MCF 10A (cell line): ENCODE measurements at regions of chr11 and their contacts with region 1.

Region 1: DNA sequence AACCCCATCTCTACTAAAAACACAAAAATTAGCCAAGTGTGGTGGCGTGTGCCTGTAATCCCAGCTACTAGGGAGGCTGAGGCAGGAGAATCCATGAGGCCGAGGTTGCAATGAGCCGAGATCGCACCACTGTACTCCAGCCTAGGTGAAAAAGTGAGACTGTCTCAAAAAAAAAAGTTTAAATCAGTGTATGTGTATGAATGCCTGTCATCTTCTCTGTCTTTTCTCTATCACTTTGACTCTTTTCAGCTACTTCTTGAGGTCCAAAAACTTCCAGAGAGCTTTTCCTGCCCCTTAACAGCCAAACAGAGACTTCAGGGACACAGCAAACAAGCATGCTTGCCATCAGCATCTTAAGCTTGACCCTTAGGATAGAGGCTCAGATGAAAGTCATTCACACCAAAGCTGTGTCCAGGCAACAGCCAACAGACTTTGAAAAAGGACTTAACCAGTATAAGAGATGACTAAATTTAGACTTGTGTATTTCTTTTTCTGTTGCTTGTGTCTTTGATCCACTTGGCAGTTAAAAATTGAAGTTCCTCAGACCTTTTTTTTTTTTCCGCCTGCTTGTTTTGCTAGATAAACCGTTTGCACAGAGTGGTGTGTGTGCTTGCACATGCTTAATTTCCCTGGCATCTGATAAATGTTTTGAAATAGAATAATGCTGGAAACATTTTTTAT is 151.9 kb downstream of the DBX1 start:
- DNase-seq: no peak
- H3K4me3 Mint-ChIP-seq: no peak overlapping the region
- H3K27ac Mint-ChIP-seq: no peak overlapping the region
- H3K4me1 Mint-ChIP-seq: peaks cover 24% of the 10 kb centered on the region
- H3K27me3 Mint-ChIP-seq: no peaks in the 10 kb centered on the region
- CTCF ChIP-seq: no peak

Region 2: DNA sequence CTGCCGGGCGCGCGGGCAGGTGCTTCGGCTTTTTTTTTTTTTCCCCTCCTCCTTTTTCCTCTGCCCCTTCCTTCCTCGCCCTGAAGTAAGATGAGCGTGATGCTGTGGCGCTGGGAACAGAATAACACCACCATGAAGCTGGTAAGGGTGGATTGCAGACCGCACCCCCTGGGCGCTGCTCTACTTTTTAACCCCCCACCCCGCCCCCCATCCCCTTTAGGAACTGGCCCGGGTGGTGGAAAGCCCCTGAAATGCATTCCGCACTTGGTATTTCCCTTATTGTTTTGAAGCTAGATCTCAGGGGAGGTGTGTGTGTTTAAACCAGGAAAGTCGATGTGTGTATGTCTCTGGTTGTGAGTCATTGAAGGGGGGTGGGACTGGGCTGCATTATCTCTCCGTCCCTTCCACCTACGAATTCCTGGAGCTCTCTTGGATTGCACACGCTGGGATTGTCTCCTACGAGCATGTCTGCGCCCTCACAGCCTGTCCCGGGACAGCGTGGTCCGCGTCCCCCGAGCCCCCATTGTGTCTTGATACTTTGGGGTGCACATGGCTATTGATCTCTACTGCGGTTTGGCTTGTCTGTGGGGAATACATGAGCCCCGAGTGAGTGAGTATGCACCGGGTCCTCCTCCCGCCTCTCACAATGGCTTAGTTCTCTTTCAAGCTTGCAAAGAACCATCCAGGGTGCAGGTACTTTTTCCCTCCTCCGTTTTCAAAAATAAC is 230.8 kb before region 1 on chr11:
- CTCF ChIA-PET with region 1: no interaction called
- POLR2A ChIA-PET with region 1: no interaction called
- intact Hi-C with region 1: no loop called
- DNase-seq: peak; percentile 63
- H3K4me3 Mint-ChIP-seq: peak overlapping the region; percentile 70
- H3K27ac Mint-ChIP-seq: no peak overlapping the region
- H3K4me1 Mint-ChIP-seq: peaks cover 17% of the 10 kb centered on the region
- H3K27me3 Mint-ChIP-seq: no peaks in the 10 kb centered on the region
- CTCF ChIP-seq: no peak

Region 3: DNA sequence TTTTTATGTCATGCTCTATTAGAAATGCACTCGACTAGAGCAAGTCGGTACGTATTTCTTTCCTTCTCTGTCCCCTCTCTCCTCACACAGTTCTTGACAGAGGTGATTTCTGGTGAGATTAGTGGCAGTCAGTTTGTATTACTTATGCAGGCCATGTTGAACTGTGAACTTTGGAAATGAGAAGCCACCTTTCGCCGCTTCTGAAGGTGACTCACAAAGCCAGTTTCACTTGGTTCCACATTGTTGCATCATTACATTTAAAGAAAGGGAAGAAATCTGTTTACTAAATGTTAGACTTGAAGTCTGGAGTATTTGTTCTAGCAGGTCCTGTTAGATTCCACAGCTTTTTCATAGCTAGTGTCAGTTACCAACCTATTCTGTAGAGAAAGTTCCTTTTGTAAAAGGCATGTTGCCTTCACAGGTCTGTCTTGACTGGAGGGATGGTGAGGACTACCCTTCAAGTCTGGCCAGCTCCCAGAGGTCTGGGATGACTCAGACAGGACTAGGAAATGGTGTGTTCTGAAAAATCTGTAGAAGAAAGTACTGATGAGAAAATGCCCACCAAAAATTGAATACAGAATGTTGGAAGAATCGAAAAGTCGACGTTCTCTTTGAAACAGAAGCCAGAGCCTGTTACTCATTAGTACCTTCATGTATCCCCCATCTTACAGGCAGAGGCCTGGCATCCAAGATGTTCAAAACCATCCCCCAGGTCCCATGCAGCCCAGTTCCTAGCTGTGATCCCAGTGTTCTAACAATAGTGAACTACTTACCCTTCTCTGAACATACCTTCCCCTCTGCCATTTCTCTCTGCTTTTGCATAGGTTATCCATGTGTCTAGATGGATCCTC is 29.4 kb before region 1 on chr11:
- CTCF ChIA-PET with region 1: interaction called, 3 read pairs
- POLR2A ChIA-PET with region 1: interaction called, 21 read pairs
- intact Hi-C with region 1: loop called (anchors 2 kb)
- DNase-seq: peak; percentile 91
- H3K4me3 Mint-ChIP-seq: peak overlapping the region; percentile 37
- H3K27ac Mint-ChIP-seq: peak overlapping the region; percentile 96
- H3K4me1 Mint-ChIP-seq: peaks cover 41% of the 10 kb centered on the region
- H3K27me3 Mint-ChIP-seq: no peaks in the 10 kb centered on the region
- CTCF ChIP-seq: no peak